ENCODE measurements at regions of chr7 and their contacts with region 1.

Region 1: DNA sequence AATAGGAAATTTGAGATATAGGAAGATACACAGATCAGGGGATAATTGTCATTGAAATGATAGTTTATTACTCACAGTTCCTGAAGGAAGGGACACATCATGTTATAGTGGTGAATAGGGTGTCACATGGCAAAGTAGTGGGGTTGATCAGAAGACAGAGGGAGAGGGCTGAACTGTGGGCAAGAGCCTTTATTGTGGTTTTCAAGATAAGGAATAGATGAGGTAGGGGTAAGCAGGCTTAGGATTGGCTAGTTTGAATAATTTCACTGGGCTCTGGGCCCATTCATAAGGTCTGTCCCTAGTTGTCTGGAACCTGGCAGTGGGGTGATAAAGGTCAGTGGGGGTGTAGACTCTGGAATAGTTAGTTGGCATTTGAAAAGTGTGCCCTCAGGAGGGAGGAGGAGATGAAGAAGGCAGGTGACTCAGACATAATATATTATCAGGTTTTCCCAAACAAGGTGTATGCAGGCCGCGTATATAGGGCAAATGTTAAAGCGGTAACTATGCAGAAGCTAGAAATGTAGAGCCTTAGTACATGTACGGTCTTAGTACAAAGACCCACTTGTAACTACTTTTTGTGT is 18.5 kb downstream of the FGL2 start:
- DNase-seq: no peak
- H3K4me3 ChIP-seq: no peak overlapping the region
- H3K27ac ChIP-seq: no peak overlapping the region
- H3K4me1 ChIP-seq: peaks cover 2% of the 10 kb centered on the region
- H3K27me3 ChIP-seq: no peaks in the 10 kb centered on the region
- CTCF ChIP-seq: no peak
- POLR2A ChIP-seq: no peak

Region 2: GRCh38 chr7:76262683-76263402 is 918.3 kb before region 1 on chr7:
- CTCF ChIA-PET with region 1: no interaction called
- POLR2A ChIA-PET with region 1: no interaction called
- dilution Hi-C with region 1: no loop called
- intact Hi-C with region 1: no loop called
- DNase-seq: peak; percentile 48
- H3K4me3 ChIP-seq: no peak overlapping the region
- H3K27ac ChIP-seq: no peak overlapping the region
- H3K4me1 ChIP-seq: peaks cover 4% of the 10 kb centered on the region
- H3K27me3 ChIP-seq: peaks cover 12 to 14% of the 10 kb centered on the region in 2 experiments
- CTCF ChIP-seq: peak; percentile 70 to 80
- POLR2A ChIP-seq: no peak

Region 3: DNA sequence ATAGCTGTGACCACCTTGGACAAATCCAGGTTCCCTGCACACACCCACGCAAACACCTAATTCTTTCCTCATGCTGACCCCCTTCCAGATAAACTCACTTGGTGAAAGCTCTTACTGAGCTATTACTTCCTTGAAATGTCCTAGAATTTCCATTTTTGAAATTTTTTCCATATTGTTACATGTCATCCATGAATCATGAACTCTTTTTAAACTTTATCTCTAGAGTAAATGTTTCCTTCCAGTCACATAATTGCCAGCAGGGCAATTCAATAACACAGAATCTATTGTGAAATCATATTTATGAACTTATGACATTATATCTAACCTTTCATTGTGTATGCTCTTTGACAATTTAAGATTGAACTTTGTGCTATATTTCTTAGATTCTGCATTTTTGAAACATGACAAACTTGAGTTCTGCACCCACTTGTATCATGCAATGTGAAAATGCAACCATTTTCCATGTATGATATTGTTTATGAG is 45.3 kb after region 1 on chr7:
- CTCF ChIA-PET with region 1: no interaction called
- POLR2A ChIA-PET with region 1: no interaction called
- dilution Hi-C with region 1: no loop called
- intact Hi-C with region 1: loop called (anchors 2 kb)
- DNase-seq: peak; percentile 86
- H3K4me3 ChIP-seq: no peak overlapping the region
- H3K27ac ChIP-seq: no peak overlapping the region
- H3K4me1 ChIP-seq: peaks cover 3% of the 10 kb centered on the region
- H3K27me3 ChIP-seq: peaks cover 0 to 4% of the 10 kb centered on the region in 2 experiments
- CTCF ChIP-seq: no peak
- POLR2A ChIP-seq: no peak